GM12878 (cell line): ENCODE measurements at regions of chr18 and their contacts with region 1.

Region 1: GRCh38 chr18:30544141-30544540 is 498.4 kb downstream of the DSC3 start:
- DNase-seq: no peak
- ATAC-seq: no peak
- H3K4me3 ChIP-seq: no peak overlapping the region
- H3K27ac ChIP-seq: no peak overlapping the region
- H3K4me1 ChIP-seq: no peaks in the 10 kb centered on the region
- H3K27me3 ChIP-seq: no peaks in the 10 kb centered on the region
- CTCF ChIP-seq: no peak
- EP300 ChIP-seq: no peak
- POLR2A ChIP-seq: no peak
- RAD21 ChIP-seq: no peak

Region 2: DNA sequence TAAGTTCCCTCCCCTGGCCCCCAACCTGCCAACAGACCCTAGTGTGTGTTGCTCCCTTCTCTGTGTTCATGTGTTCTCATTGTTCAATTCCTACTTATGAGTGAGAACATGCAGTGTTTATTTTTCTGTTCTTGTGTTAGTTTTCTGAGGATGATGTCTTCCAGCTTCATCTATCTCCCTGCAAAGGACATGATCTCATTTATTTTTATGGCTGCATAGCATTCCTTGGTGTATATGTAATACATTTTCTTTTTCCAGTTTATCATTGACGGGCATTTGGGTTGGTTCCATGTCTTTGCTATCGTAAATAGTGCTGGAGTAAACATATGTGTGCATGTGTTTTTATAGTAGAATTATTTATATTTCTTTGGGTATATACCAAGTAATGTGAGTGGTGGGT is 103.8 kb before region 1 on chr18:
- CTCF ChIA-PET with region 1: no interaction called
- POLR2A ChIA-PET with region 1: no interaction called
- RAD21 ChIA-PET with region 1: no interaction called
- SMC1A ChIA-PET with region 1: no interaction called
- in situ Hi-C with region 1: no loop called
- intact Hi-C with region 1: loop called (anchors 5 kb)
- DNase-seq: no peak
- ATAC-seq: no peak
- H3K4me3 ChIP-seq: no peak overlapping the region
- H3K27ac ChIP-seq: no peak overlapping the region
- H3K4me1 ChIP-seq: no peaks in the 10 kb centered on the region
- H3K27me3 ChIP-seq: no peaks in the 10 kb centered on the region
- CTCF ChIP-seq: no peak
- EP300 ChIP-seq: no peak
- POLR2A ChIP-seq: no peak
- RAD21 ChIP-seq: no peak

Region 3: GRCh38 chr18:31120594-31120993 is 576.5 kb after region 1 on chr18:
- CTCF ChIA-PET with region 1: no interaction called
- POLR2A ChIA-PET with region 1: no interaction called
- RAD21 ChIA-PET with region 1: no interaction called
- SMC1A ChIA-PET with region 1: no interaction called
- in situ Hi-C with region 1: no loop called
- intact Hi-C with region 1: no loop called
- DNase-seq: no peak
- ATAC-seq: peak; percentile 37; the same call in 2 of the 3 replicates
- H3K4me3 ChIP-seq: no peak overlapping the region
- H3K27ac ChIP-seq: no peak overlapping the region
- H3K4me1 ChIP-seq: no peaks in the 10 kb centered on the region
- H3K27me3 ChIP-seq: no peaks in the 10 kb centered on the region
- CTCF ChIP-seq: no peak
- EP300 ChIP-seq: no peak
- POLR2A ChIP-seq: no peak
- RAD21 ChIP-seq: no peak